Activated T-helper 1 cell treated with anti-CD3 and anti-CD28 coated beads, Interleukin-12 subunit alpha, Interleukin-12 subunit beta, Interleukin-2, Interleukin-4 antibody, amounts not matched to agents 30 ng/mL and 10 ng/mL and 1 ng/mL, durations not matched to agents 14 hours and 24 hours and 36 hours (primary cell): ENCODE measurements at regions of chr7 and their contacts with region 1.

Region 1: GRCh38 chr7:36784991-36785940 is 61.0 kb upstream of the AOAH start:
- DNase-seq: peak; percentile 68
- H3K4me3 Mint-ChIP-seq: peak overlapping the region; percentile 72
- H3K27ac Mint-ChIP-seq: peak overlapping the region; percentile 92
- H3K4me1 Mint-ChIP-seq: peaks cover 74% of the 10 kb centered on the region
- H3K27me3 Mint-ChIP-seq: no peaks in the 10 kb centered on the region

Region 2: DNA sequence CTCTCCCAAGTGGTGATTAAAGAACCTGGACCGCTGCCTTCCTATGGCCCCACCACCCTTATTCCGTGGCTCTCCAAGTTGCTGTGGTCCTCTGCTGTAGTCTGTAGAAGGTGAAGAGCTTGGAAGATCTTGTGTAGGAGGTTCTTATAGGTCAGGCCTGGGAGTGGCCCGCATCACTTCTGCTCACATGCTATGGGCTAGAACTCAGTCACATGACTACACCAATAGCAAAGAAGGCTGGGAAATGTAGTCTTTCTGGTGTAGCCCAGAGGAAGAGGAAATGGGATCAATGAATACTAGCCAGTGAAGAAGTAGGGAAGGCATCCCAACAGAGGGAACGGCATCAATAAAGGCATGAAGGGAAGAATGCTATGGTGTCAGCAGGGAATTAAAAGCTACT is 19.7 kb before region 1 on chr7:
- intact Hi-C with region 1: loop called (anchors 1 kb)
- DNase-seq: no peak
- H3K4me3 Mint-ChIP-seq: no peak overlapping the region
- H3K27ac Mint-ChIP-seq: no peak overlapping the region
- H3K4me1 Mint-ChIP-seq: peaks cover 44% of the 10 kb centered on the region
- H3K27me3 Mint-ChIP-seq: peaks cover 6% of the 10 kb centered on the region

Region 3: DNA sequence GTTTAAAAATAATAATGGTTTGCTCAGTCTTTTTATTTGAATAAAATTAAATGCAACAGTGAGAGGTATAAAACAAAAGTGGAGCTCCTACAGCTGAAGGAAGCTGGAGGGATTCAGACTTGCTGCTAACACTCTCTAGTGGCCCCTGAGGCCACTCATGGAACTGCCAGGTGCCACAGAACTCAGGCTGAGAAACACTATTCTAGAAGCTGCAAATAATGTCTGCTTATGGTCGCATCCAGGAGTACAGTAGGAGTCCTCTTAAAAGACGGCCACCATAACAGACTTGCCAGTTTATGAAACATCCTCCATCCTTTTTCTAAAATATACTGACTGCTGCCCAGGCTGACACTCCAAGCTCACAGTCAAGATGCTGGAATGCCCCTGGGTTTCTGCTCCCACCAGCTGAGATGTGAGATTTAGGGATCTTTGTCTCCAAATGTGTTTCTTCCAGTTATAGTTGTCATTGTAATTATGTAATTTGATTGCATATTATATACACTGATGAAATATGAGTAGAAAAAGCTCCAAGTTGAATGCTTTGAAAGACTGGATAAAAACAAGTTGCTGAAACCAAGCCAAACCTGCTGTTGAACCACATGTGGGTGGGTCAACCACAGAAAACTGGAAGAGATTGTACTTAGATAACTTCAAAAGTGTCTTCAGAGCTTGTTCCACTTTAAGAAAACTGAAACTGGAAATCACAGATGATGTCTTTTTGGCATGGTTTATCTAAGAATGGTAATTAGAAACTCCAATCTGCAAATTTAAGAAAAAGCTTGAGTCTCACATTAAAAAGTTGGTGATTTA is 152.7 kb after region 1 on chr7:
- intact Hi-C with region 1: loop called (anchors 5 kb)
- DNase-seq: peak; percentile 59
- H3K4me3 Mint-ChIP-seq: peak overlapping the region; percentile 49
- H3K27ac Mint-ChIP-seq: peak overlapping the region; percentile 65
- H3K4me1 Mint-ChIP-seq: peaks cover 51% of the 10 kb centered on the region
- H3K27me3 Mint-ChIP-seq: no peaks in the 10 kb centered on the region